CD4-positive, alpha-beta memory T cell (primary cell): ENCODE measurements at regions of chr9 and their contacts with region 1.

Region 1: DNA sequence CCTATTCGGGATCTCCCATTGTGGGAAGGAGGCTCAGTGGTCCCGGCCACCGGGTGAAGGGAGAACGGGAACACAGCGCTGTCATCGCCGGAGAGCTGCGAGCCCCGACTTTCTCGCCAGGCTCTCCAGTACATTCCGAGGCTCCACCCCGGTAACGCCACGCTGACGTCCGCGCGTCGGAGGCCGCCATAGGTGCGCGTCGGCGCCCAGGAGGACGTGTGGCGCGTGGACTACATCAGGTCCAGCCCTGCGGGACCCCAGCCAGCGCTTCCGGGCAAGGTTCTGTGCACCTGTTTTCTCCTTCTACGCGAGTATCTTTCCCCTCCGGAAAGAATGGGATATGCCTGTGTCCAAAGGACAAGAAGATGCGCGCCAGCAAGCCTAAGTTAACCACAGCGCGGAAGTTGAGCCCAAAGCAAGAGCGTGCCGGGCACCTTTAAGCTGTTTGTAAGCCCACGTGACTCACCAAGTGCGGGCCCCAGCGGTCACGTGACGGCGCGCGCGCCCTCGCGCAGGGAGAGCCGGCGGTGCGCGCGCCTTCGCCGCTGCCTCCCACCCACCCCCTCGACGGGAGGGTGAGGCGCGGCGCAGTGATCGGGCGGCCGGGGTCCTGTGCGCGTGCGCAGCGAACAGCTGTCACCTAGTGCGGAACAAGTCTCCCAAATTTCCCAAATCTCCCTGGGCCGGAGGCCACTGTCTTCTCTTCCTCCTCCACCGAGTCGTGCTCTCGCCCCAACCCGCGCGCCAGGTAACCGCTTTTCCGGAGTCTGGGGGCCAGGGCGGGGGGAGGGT is at the start of gene KDM4C:
- DNase-seq: peak; percentile 94 to 96 (median 94)
- H3K4me3 ChIP-seq: peak within 1 kb of the TSS; percentile 66 to 82
- H3K4me3 Mint-ChIP-seq: peak within 1 kb of the TSS; percentile 95 to 99 (median 98)
- H3K27ac ChIP-seq: peak within 1 kb of the TSS; percentile 92
- H3K27ac Mint-ChIP-seq: peak within 1 kb of the TSS; percentile 97 to 100 (median 100)
- H3K4me1 ChIP-seq: peaks cover 22% of the 10 kb centered on the region
- H3K4me1 Mint-ChIP-seq: peaks cover 21 to 51% (median 31%) of the 10 kb centered on the region in 4 donors
- H3K27me3 ChIP-seq: no peaks in the 10 kb centered on the region
- H3K27me3 Mint-ChIP-seq: no peaks in the 10 kb centered on the region
- total RNA-seq, gene KDM4C: 80.5 to 90.7 TPM

Region 2: GRCh38 chr9:6008169-6008979 is 749.3 kb before region 1 on chr9:
- CTCF ChIA-PET with region 1: no interaction called
- POLR2A ChIA-PET with region 1: interaction called, 14 read pairs
- intact Hi-C with region 1: loop called (anchors 2 kb)
- DNase-seq: peak; percentile 90 to 99 (median 95)
- H3K4me3 ChIP-seq: peak overlapping the region in 1 of 2 donors; percentile 82
- H3K4me3 Mint-ChIP-seq: peak overlapping the region; percentile 69 to 93 (median 82)
- H3K27ac ChIP-seq: peak overlapping the region; percentile 83
- H3K27ac Mint-ChIP-seq: peak overlapping the region; percentile 91 to 96 (median 94)
- H3K4me1 ChIP-seq: peaks cover 45% of the 10 kb centered on the region
- H3K4me1 Mint-ChIP-seq: peaks cover 28 to 76% (median 45%) of the 10 kb centered on the region in 4 donors
- H3K27me3 ChIP-seq: no peaks in the 10 kb centered on the region
- H3K27me3 Mint-ChIP-seq: no peaks in the 10 kb centered on the region

Region 3: GRCh38 chr9:6681147-6681956 is 76.3 kb before region 1 on chr9:
- CTCF ChIA-PET with region 1: interaction called, 5 read pairs
- POLR2A ChIA-PET with region 1: interaction called, 112 read pairs
- intact Hi-C with region 1: loop called (anchors 1 kb)
- DNase-seq: peak; percentile 92 to 96 (median 94)
- H3K4me3 ChIP-seq: peak overlapping the region; percentile 91 to 99
- H3K4me3 Mint-ChIP-seq: peak overlapping the region; percentile 93 to 97 (median 95)
- H3K27ac ChIP-seq: peak overlapping the region; percentile 82
- H3K27ac Mint-ChIP-seq: peak overlapping the region; percentile 94 to 100 (median 99)
- H3K4me1 ChIP-seq: peaks cover 23% of the 10 kb centered on the region
- H3K4me1 Mint-ChIP-seq: peaks cover 14 to 34% (median 22%) of the 10 kb centered on the region in 4 donors
- H3K27me3 ChIP-seq: no peaks in the 10 kb centered on the region
- H3K27me3 Mint-ChIP-seq: no peaks in the 10 kb centered on the region

Region 4: DNA sequence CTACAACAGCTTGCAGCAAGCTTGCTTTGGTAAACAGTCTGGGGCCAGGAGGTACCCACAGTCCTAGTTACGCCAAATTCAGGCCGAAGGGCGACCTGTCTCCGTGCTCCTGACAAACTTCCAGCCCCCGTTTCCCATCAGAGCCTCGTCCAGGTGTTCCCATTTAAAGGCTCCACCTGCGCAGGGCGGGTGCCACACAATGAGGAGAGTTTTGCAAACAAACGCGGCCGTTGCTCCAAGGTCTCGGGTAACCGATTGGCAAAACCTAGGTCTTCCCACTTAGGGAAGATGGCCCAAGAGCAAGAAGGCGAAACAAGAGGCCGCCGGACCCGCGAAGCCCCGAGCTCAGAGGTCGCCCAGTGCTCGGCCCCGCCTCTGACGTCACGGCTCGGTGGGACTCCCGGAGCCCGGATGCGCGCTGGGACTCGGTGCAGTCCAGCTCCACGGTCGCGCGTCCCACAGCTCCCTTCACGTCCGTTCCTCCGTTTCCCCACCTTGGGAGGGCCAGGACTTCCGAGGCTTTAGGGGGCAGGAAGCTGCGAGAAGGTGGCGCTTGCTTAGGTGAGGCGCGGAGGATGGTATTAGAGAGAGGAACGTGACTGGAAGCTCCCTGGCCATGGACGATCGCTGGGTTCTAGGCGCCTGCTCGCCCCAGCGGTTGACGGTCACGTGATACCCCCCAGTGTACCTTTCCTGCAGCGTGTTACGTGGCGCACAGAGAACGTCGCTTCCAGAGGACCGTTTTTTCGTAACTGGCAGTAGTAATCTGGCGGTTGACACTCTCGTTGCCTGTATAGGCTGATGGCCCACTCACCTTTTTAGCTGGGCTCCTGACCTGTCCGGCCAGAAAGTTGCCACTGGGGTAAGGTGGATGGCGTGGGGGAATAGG is 41.7 kb before region 1 on chr9:
- CTCF ChIA-PET with region 1: no interaction called
- POLR2A ChIA-PET with region 1: interaction called, 86 read pairs
- intact Hi-C with region 1: loop called (anchors 1 kb)
- DNase-seq: peak; percentile 58 to 70 (median 65)
- H3K4me3 ChIP-seq: peak overlapping the region; percentile 11 to 57
- H3K4me3 Mint-ChIP-seq: peak overlapping the region; percentile 85 to 94 (median 88)
- H3K27ac ChIP-seq: peak overlapping the region; percentile 66
- H3K27ac Mint-ChIP-seq: peak overlapping the region; percentile 53 to 93 (median 86)
- H3K4me1 ChIP-seq: peaks cover 12% of the 10 kb centered on the region
- H3K4me1 Mint-ChIP-seq: peaks cover 4 to 10% (median 6%) of the 10 kb centered on the region in 4 donors
- H3K27me3 ChIP-seq: no peaks in the 10 kb centered on the region
- H3K27me3 Mint-ChIP-seq: no peaks in the 10 kb centered on the region

Region 5: DNA sequence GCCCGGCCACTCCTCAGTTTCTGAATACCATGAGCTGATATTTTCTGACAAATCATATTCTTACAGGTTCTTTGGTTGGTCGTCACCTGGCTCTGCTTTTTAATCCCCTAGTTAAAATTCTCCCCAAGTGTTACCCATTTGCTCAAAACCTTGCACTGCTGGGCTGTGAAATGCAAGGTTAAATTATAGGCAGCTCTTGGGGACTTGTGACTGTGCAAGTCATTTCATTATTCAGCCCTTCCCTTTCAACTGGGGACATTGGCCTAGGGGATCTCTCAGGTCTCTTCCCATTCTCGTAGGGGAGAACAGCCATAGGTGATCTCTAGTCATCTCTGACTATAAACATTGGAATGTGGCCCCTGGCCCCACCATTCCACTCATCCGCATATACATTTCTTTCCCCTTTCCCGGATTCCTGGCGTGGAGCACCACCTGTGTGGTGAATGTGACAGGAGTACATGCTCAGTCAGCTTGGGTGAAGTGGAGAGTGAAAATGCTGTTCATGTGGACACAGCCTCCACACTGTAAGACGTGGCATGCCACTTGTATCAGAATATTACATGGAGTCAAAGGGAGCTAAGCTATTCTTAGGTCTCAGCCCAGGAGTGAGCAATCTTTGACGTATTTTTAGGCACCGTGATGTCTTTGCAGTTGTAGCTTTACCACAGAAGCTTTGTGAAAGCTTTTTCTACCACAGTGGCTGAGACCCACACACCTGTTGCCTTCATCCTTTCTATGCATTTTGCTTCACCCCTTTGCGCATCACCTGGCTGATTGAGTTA is 386.8 kb after region 1 on chr9:
- CTCF ChIA-PET with region 1: no interaction called
- POLR2A ChIA-PET with region 1: no interaction called
- intact Hi-C with region 1: no loop called
- DNase-seq: no peak
- H3K4me3 ChIP-seq: no peak overlapping the region
- H3K4me3 Mint-ChIP-seq: no peak overlapping the region
- H3K27ac ChIP-seq: no peak overlapping the region
- H3K27ac Mint-ChIP-seq: peak overlapping the region in 2 of 7 donors; percentile 25 to 64
- H3K4me1 ChIP-seq: peaks cover 12% of the 10 kb centered on the region
- H3K4me1 Mint-ChIP-seq: peaks cover 16 to 39% (median 30%) of the 10 kb centered on the region in 4 donors
- H3K27me3 ChIP-seq: no peaks in the 10 kb centered on the region
- H3K27me3 Mint-ChIP-seq: no peaks in the 10 kb centered on the region

Region 6: DNA sequence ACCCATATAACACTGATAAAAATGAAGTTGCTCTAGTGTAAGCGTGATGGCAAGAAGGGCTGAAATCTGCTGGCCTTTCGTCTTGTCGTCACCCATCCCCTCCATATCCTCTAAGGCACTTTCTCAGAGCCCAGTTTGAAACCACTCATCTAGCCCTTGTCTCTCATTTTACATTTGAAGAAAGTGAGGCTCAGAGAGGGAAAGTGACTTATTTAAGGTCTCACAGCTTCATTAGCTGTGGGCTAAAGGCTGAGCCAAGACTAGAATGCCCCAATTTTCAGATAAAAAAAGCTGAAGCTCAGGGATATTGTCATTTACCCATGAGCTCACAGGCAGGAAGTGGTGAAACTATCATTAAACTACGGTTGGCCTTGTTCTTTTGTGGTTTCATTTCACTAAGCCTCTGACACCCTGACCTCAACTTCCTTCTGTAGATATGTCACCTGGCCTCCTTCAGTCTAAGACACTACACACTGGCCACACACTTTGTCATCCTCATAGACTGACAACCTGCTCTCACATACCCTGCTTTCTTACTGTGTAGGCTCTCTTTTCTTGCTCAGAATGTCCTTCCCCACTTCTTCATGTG is 1218.6 kb after region 1 on chr9:
- CTCF ChIA-PET with region 1: no interaction called
- POLR2A ChIA-PET with region 1: no interaction called
- intact Hi-C with region 1: loop called (anchors 10 kb)
- DNase-seq: peak; percentile 84 to 90 (median 89)
- H3K4me3 ChIP-seq: no peak overlapping the region
- H3K4me3 Mint-ChIP-seq: peak overlapping the region; percentile 44 to 81 (median 71)
- H3K27ac ChIP-seq: peak overlapping the region; percentile 51
- H3K27ac Mint-ChIP-seq: peak overlapping the region; percentile 83 to 97 (median 94)
- H3K4me1 ChIP-seq: peaks cover 64% of the 10 kb centered on the region
- H3K4me1 Mint-ChIP-seq: peaks cover 42 to 65% (median 53%) of the 10 kb centered on the region in 4 donors
- H3K27me3 ChIP-seq: no peaks in the 10 kb centered on the region
- H3K27me3 Mint-ChIP-seq: no peaks in the 10 kb centered on the region